Right ventricle myocardium inferior (tissue), 1 donor: ENCODE measurements at regions of chr4 and their contacts with region 1.

Region 1: GRCh38 chr4:138405934-138406567 is 163.9 kb upstream of the SLC7A11 start:
- DNase-seq: no peak
- ATAC-seq: no peak

Region 2: DNA sequence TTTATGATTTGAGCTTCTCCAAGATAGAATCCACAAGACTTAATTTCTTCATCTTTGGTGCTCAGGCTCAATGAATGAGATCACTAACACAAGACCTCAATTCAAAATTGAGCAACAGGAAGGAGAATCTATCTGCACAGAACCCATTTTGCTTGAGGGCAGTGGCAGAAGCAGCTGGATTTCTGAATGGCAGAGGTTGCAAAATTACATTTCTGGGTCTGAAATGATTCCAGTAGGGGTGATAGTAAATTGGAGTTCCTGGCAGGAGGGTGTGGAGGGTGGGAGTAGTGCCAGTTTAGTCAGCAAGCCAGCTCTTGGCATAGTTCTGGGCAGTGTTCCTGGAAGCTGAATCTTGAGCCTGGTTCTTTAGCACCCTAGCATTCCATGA is 445.0 kb before region 1 on chr4:
- intact Hi-C with region 1: no loop called
- DNase-seq: no peak
- ATAC-seq: peak; percentile 44

Region 3: DNA sequence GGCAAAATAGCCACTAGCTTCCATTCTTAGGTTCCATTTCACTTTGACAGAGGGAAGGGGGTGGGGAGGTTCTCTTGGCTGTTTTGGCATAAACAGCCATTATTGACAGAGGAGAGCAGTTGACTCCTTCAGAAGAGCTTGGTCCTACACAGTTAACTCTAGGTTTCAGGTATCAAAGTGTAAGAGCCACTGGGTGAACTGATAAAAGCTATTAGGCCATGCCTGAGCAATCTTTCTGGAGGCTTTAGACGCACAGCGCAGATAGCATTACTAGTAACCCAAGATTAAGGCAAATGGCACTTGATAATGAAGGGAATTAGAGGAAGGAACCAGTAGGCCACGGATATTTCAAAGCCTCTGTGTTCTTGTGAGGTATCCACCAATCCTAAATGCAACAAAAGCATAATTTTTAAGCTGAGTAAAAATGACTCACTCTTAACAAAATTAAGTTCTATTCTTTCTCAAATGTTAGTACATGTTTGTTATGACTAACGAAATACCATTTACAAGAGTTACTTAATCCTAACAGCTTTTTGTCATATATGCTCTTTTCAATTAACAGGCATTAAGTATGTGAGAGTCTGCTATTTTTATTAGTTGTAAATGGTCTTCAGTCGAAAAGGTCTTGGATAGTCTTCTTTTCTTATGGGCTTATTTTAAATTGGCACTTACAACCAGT is 217.5 kb before region 1 on chr4:
- intact Hi-C with region 1: loop called (anchors 5 kb)
- DNase-seq: no peak
- ATAC-seq: no peak

Region 4: GRCh38 chr4:138348055-138348454 is 58.0 kb before region 1 on chr4:
- intact Hi-C with region 1: no loop called
- DNase-seq: no peak
- ATAC-seq: no peak

Region 5: DNA sequence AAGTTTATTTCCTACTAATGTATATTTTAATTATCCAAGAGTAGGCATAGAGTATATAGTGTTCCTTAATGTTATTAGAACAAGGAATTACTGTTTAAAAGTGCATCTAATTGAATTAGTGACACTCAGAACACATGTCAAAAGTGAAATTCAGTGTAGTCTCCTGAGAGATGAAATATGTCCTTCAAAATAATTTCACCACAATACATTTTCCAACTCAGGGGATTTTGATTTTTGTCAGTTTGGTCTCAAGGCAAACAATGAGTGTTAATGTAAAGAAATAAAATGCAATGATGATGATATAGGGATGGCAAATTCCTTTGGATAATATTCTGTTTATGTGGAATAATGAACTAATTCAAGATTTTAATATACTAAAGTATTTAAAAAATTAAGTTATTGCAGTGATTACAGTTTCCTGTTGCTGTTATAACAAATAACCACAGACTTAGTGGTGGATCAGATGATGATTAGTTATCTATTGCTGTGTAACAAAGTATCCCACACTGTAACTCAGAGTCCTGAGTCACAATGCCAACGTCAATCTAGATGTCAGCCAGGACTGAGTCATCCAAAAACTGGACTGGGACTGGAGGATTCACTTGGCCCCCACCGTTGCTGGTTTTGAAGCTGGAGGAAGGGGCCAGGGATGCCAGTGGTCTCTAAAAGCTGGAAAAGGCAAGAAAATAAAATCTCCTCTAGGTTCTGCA is 15.9 kb before region 1 on chr4:
- intact Hi-C with region 1: no loop called
- DNase-seq: no peak
- ATAC-seq: no peak